ENCODE measurements at regions of chr12 and their contacts with region 1.

Region 1: DNA sequence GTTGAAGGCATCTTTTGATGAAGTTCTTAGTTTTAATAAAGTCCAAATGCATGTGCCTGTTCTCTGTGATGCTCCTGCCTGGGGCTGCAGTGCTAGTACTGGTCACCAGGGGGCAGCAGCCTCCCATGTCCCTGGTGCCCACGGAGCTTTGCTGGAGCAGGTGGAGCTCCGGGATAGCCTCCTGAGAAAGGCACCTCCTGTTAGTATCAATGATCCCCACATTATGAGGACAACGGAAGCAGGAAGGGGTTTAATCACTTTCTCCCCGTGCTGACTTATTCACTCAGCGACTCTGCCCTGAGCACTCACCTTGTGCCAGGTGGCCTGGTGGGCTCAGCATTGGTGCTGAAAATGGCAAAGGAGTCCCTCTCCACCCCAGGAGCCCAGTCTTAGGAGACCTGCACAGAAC is 123.0 kb upstream of the PZP start:
- DNase-seq: peak; percentile 41
- ATAC-seq: peak; percentile 96
- H3K4me3 ChIP-seq: no peak overlapping the region
- H3K27ac ChIP-seq: no peak overlapping the region
- H3K4me1 ChIP-seq: peaks cover 6% of the 10 kb centered on the region; the same call in 1 of the 2 replicates
- H3K27me3 ChIP-seq: no peaks in the 10 kb centered on the region; the same call in 1 of the 2 replicates
- CTCF ChIP-seq: peak; percentile 85
- POLR2A ChIP-seq: no peak
- RAD21 ChIP-seq: peak; percentile 86

Region 2: DNA sequence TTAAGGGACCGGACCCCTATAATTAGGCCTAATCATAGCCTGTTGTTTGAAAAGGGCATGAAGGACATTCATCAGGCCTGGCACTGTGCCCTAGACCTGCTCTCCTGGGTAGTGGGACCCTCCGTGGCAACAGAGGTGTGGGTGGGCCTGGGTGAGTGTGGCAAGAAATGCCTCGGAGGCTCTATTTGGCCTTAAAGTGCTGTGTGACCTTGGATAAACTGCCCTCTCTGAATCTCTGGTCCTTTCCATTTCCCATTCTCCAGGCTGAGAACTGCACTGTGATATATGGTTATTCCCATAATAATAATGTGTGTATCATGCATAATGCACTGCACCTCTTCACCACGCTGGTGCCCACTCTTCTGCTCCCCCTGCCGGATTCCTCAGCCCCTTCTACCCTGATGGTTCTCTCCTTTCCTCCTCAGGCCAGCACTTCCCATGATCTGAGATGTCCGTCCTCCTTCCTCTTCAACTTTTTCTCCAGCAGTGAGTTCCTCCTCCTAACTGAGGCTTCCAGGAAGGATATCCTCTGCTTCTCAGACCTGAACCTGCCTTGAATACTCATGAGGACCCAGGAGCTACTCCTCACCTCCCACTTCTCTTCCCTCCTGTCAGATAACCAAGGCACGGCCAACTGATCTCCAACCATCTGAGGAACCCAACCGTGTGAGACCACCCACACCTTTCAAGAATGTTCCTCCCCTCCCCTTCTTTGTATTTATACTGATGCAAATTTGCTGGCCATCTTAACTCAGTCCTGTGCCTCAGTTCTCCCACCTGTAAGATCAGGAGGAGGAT is 12.0 kb before region 1 on chr12:
- CTCF ChIA-PET with region 1: no interaction called
- POLR2A ChIA-PET with region 1: no interaction called
- dilution Hi-C with region 1: no loop called
- in situ Hi-C with region 1: no loop called
- intact Hi-C with region 1: no loop called
- DNase-seq: no peak
- ATAC-seq: no peak
- H3K4me3 ChIP-seq: no peak overlapping the region
- H3K27ac ChIP-seq: no peak overlapping the region
- H3K4me1 ChIP-seq: no peaks in the 10 kb centered on the region
- H3K27me3 ChIP-seq: peaks cover 3% of the 10 kb centered on the region; the same call in 1 of the 2 replicates
- CTCF ChIP-seq: no peak
- POLR2A ChIP-seq: no peak
- RAD21 ChIP-seq: no peak

Region 3: GRCh38 chr12:9464408-9464807 is 133.2 kb after region 1 on chr12:
- CTCF ChIA-PET with region 1: no interaction called
- POLR2A ChIA-PET with region 1: no interaction called
- dilution Hi-C with region 1: no loop called
- in situ Hi-C with region 1: loop called (anchors 25 kb)
- intact Hi-C with region 1: no loop called
- DNase-seq: no peak
- ATAC-seq: no peak
- H3K4me3 ChIP-seq: no peak overlapping the region
- H3K27ac ChIP-seq: no peak overlapping the region
- H3K4me1 ChIP-seq: no peaks in the 10 kb centered on the region
- H3K27me3 ChIP-seq: no peaks in the 10 kb centered on the region
- CTCF ChIP-seq: no peak
- POLR2A ChIP-seq: no peak
- RAD21 ChIP-seq: no peak

Region 4: GRCh38 chr12:9634177-9634803 is 303.1 kb after region 1 on chr12:
- CTCF ChIA-PET with region 1: interaction called, 3 read pairs
- POLR2A ChIA-PET with region 1: no interaction called
- dilution Hi-C with region 1: no loop called
- in situ Hi-C with region 1: loop called (anchors 25 kb)
- intact Hi-C with region 1: loop called (anchors 2 kb)
- DNase-seq: peak; percentile 47
- ATAC-seq: peak; percentile 62
- H3K4me3 ChIP-seq: no peak overlapping the region
- H3K27ac ChIP-seq: no peak overlapping the region
- H3K4me1 ChIP-seq: no peaks in the 10 kb centered on the region
- H3K27me3 ChIP-seq: no peaks in the 10 kb centered on the region; the same call in 1 of the 2 replicates
- CTCF ChIP-seq: peak; percentile 87
- POLR2A ChIP-seq: no peak
- RAD21 ChIP-seq: peak; percentile 85

Region 5: DNA sequence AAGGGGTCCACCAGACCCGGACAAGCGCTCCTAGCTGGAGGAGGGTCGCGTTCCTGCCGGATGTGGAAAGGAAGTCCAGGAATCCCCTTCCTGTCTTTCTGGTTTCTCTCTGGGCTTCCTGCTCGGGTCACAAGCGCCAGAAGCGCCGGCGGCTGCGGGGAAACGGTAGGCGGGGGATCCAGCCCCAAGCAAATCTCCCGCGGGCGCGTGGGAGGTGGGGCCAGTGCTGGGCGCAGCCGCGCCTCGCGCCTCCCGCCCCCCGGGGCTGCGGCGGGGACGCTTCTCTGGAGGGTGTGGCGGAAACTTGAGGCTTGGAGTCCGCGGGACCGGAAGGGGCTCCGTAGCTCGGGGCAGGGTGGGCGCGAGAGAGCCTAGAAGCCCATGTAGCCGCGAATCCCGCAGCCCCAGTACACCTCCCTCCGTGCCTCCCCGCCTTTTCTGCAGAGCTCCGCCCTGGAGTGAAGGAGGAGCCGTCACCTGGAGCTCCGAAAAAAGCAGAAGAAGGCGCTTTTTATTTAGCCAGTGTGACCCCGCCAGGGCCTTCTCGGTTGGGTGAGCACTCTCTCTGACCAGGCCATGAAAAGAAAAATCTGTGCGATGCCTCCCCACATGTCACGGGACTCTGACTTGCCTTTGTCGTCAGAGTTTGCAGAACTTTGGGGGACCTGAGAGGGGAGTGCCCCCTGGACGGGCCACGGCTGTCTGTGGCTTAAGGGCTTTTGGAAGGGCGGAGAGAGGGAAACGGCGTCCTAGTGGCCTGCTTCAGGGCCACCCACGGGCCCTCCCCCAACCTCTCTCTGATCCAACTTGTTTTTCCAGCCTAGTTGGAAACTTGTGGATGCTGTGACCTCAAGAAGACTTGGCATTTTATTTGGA is 316.8 kb after region 1 on chr12:
- CTCF ChIA-PET with region 1: no interaction called
- POLR2A ChIA-PET with region 1: no interaction called
- dilution Hi-C with region 1: no loop called
- in situ Hi-C with region 1: loop called (anchors 25 kb)
- intact Hi-C with region 1: loop called (anchors 5 kb)
- DNase-seq: peak; percentile 69
- ATAC-seq: peak; percentile 91
- H3K4me3 ChIP-seq: peak overlapping the region; percentile 60
- H3K27ac ChIP-seq: peak overlapping the region; percentile 81
- H3K4me1 ChIP-seq: peaks cover 5% of the 10 kb centered on the region
- H3K27me3 ChIP-seq: no peaks in the 10 kb centered on the region
- CTCF ChIP-seq: no peak
- POLR2A ChIP-seq: peak; percentile 28; the same call in 1 of the 2 replicates
- RAD21 ChIP-seq: no peak

Region 6: GRCh38 chr12:9707864-9708808 is 376.9 kb after region 1 on chr12:
- CTCF ChIA-PET with region 1: interaction called, 3 read pairs
- POLR2A ChIA-PET with region 1: no interaction called
- dilution Hi-C with region 1: no loop called
- in situ Hi-C with region 1: loop called (anchors 25 kb)
- intact Hi-C with region 1: loop called (anchors 1 kb)
- DNase-seq: peak; percentile 65
- ATAC-seq: peak; percentile 86
- H3K4me3 ChIP-seq: no peak overlapping the region
- H3K27ac ChIP-seq: no peak overlapping the region
- H3K4me1 ChIP-seq: no peaks in the 10 kb centered on the region
- H3K27me3 ChIP-seq: no peaks in the 10 kb centered on the region
- CTCF ChIP-seq: peak; percentile 79
- POLR2A ChIP-seq: no peak
- RAD21 ChIP-seq: peak; percentile 80

Measured in IMR-90 (cell line).